Panc1 (cell line): ENCODE measurements at regions of chr2 and their contacts with region 1.

Region 1: DNA sequence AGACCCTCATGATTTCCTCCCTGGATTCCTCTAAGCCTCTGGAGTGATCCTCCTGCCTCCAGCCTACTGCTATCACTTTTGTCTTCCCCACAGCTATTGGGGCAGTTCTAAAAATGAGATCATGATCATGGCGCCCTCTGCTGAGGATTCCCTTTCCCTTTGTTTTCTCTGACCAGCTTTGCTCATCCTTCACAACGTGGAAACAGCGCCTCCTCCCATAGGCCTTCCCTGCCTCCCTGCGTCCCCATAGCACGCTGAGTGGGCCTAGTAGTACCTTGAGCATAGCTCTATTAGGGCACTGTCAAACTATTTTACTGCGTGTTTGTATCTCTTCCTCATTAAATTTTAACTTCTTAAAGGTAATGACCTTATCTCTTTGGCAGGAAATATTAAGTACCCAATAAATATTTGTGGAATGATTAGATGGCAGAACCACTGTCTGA is 207.0 kb upstream of the FANCL start:
- DNase-seq: peak; percentile 72
- ATAC-seq: peak; percentile 98
- H3K4me3 ChIP-seq: no peak overlapping the region
- H3K27ac ChIP-seq: no peak overlapping the region
- H3K4me1 ChIP-seq: no peaks in the 10 kb centered on the region
- H3K27me3 ChIP-seq: no peaks in the 10 kb centered on the region; the same call in none of the 2 replicates
- CTCF ChIP-seq: peak; percentile 86

Region 2: GRCh38 chr2:57759822-57760300 is 688.2 kb before region 1 on chr2:
- CTCF ChIA-PET with region 1: no interaction called
- POLR2A ChIA-PET with region 1: interaction called, 3 read pairs
- in situ Hi-C with region 1: no loop called
- intact Hi-C with region 1: loop called (anchors 5 kb)
- DNase-seq: peak; percentile 43
- ATAC-seq: peak; percentile 100
- H3K4me3 ChIP-seq: peak overlapping the region; percentile 20 to 59
- H3K27ac ChIP-seq: peak overlapping the region; percentile 62
- H3K4me1 ChIP-seq: peaks cover 9% of the 10 kb centered on the region; the same call in 1 of the 2 replicates
- H3K27me3 ChIP-seq: no peaks in the 10 kb centered on the region
- CTCF ChIP-seq: peak; percentile 92

Region 3: DNA sequence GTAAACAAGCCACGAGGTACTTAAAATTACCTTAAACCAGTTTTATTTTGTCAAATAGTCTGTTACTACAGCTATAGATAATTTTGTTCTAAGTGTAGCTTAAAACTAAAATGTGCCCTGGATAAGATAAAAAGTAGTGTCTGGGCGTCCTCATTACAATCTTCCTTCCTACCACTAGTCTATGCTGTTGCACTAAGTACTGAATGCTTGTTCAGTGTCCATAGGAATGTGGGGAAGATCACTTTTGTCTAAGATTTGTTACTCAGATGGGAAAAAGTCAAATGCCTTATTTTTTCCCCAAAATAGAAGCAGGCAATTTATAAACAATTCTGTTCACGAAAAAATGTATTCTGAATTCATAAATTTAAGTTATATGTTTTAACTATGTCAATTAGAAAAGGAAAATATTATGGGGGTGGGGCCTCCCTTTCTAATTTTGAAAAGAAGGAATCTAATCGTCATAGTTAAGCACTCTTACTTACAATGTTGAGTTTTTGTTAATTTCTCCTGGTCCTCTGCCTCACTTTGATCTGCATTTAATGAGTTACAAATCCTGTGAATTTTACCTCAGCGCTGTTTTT is 541.8 kb before region 1 on chr2:
- CTCF ChIA-PET with region 1: interaction called, 3 read pairs
- POLR2A ChIA-PET with region 1: no interaction called
- in situ Hi-C with region 1: no loop called
- intact Hi-C with region 1: loop called (anchors 2 kb)
- DNase-seq: peak; percentile 46
- ATAC-seq: peak; percentile 97
- H3K4me3 ChIP-seq: no peak overlapping the region
- H3K27ac ChIP-seq: no peak overlapping the region
- H3K4me1 ChIP-seq: no peaks in the 10 kb centered on the region
- H3K27me3 ChIP-seq: no peaks in the 10 kb centered on the region
- CTCF ChIP-seq: peak; percentile 81; the same call in 1 of the 2 replicates

Region 4: GRCh38 chr2:58407487-58407886 is 40.6 kb before region 1 on chr2:
- CTCF ChIA-PET with region 1: no interaction called
- POLR2A ChIA-PET with region 1: no interaction called
- in situ Hi-C with region 1: no loop called
- intact Hi-C with region 1: no loop called
- DNase-seq: no peak
- ATAC-seq: no peak
- H3K4me3 ChIP-seq: no peak overlapping the region
- H3K27ac ChIP-seq: no peak overlapping the region
- H3K4me1 ChIP-seq: no peaks in the 10 kb centered on the region
- H3K27me3 ChIP-seq: peaks cover 4% of the 10 kb centered on the region; the same call in 1 of the 2 replicates
- CTCF ChIP-seq: no peak

Region 5: GRCh38 chr2:58497168-58497567 is 49.1 kb after region 1 on chr2:
- CTCF ChIA-PET with region 1: no interaction called
- POLR2A ChIA-PET with region 1: no interaction called
- in situ Hi-C with region 1: no loop called
- intact Hi-C with region 1: no loop called
- DNase-seq: no peak
- ATAC-seq: no peak
- H3K4me3 ChIP-seq: no peak overlapping the region
- H3K27ac ChIP-seq: no peak overlapping the region
- H3K4me1 ChIP-seq: no peaks in the 10 kb centered on the region
- H3K27me3 ChIP-seq: no peaks in the 10 kb centered on the region; the same call in 1 of the 2 replicates
- CTCF ChIP-seq: no peak